ENCODE measurements at regions of chr9 and their contacts with region 1.

Region 1: DNA sequence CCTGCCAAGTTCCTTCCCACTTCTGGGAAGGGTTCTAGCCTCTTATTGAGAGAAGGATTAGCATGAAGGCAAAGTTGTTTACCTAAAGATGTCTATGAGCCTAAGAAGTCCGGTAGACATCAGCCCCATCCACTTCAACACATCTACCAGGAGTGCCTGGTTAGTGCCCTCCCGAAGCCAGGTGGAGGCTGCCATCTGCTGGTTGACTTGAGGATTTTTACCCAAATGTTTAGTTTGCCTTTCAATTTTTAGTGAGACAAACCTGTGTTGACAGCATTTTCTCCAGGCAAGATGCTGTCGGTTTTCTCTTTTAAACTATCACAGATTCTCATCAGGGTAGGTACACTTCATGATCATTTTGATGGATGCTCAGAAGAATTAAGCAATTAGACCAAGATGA is 83.6 kb upstream of the TNFSF8 start:
- DNase-seq: peak; percentile 66
- CTCF ChIP-seq: peak; percentile 48

Region 2: DNA sequence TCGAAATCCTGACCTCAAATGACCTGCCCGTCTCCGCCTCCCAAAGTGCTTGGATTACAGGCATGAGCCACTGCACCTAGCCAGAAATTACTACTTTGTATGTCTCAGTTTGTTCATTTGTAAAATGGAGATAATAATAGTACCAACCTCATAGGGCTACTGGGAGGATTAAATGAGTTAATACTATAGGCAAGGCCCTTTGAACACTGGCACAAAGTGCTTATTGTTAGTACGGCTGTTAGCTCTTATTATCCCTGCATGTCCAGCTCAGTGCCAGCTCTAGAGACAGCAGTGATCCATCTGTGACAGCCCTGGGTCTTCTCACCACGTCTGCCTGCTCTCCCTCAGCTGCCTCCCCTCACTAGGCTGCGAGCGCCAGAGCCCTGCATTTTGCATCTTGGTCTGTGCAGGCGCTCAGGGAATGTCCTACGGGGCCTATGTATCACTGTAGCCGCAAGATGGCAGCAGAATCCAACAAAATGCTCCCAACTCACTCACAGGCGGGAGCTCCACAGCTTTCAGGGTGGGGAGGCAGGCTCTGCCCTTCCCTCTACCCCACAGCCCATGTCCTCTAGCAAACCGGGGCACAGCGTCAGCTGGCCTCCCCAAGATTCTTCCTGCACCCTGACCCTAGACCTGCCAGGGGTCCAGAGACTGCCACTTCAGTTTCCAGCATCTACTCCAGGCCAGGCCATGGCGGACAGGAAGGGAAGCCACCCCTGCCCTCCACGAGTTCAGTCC is 608.5 kb before region 1 on chr9:
- in situ Hi-C with region 1: loop called (anchors 25 kb)
- DNase-seq: peak; percentile 90
- CTCF ChIP-seq: peak; percentile 82

Region 3: DNA sequence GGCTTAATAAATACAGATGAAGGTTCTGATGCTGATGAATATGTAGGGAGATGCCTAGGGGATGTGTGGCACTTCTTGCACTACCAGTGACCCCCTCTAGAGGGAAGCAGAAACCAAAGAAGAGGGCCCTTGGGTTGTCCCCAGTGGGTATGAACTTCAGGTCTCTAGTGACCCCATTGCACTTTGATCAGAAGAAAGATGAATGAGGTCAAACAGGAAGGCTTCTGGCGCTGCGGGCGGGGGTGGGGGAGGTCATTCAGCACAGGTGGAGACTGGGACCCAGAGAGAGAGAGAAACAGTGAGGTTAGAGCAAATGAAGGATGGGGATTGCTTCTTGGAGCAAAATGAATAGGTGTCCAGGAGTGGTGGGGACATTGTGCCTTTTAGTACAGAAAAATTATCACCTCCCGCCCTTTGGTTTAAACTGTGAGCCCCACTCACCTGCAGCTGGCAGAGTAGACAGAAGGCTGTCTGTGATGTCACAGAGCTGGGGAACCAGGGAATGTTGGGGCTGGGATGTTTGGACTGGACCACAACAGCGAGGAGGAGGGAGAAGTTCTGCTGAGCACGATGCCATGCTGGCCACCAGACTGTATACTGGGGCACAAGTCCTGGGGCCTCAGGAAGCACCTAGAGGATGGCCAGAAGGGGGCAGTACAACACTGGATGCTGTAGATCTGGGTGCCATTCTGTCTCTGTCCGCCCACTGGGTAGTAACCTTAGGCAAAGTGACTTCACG is 332.2 kb before region 1 on chr9 and contains the start of gene TEX48:
- in situ Hi-C with region 1: loop called (anchors 5 kb)
- DNase-seq: peak; percentile 69
- CTCF ChIP-seq: peak; percentile 69

Region 4: GRCh38 chr9:114745108-114745848 is 268.7 kb before region 1 on chr9:
- in situ Hi-C with region 1: loop called (anchors 5 kb)
- DNase-seq: no peak
- CTCF ChIP-seq: no peak

Region 5: GRCh38 chr9:115524453-115525059 is 510.6 kb after region 1 on chr9:
- in situ Hi-C with region 1: loop called (anchors 25 kb)
- DNase-seq: peak; percentile 24
- CTCF ChIP-seq: no peak